Ovary (tissue), 10 donors: ENCODE measurements at regions of chr17 and their contacts with region 1.

Region 1: DNA sequence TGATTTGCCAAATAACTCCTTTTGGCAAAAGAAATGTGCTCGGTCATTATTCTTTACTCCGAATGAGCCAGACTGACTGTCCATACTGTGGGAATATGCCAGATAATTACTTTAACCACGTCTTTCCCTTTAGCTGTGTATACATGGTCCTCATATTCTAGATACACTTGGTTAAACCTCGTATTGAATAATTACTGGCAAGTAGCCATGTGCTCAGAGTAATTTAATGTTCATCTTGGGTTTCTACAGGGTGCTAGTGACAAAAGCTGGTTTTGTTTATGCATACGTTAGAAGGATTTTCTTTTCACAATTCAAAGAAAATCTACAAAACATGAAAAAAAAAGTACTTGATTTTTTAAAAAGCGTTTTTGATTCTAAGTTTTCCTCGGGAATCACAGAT is 540.3 kb downstream of the KCNJ2 start:
- DNase-seq: no peak
- H3K4me3 ChIP-seq: no peak overlapping the region
- H3K27ac ChIP-seq: no peak overlapping the region
- H3K4me1 ChIP-seq: no peaks in the 10 kb centered on the region
- H3K27me3 ChIP-seq: no peaks in the 10 kb centered on the region
- CTCF ChIP-seq: no peak
- EP300 ChIP-seq: no peak
- POLR2A ChIP-seq: no peak

Region 2: GRCh38 chr17:70099884-70100283 is 609.7 kb before region 1 on chr17:
- intact Hi-C with region 1: loop called in 1 of 4 experiments (anchors 5 kb)
- DNase-seq: no peak
- H3K4me3 ChIP-seq: no peak overlapping the region
- H3K27ac ChIP-seq: no peak overlapping the region
- H3K4me1 ChIP-seq: no peaks in the 10 kb centered on the region
- H3K27me3 ChIP-seq: no peaks in the 10 kb centered on the region
- CTCF ChIP-seq: no peak
- EP300 ChIP-seq: no peak
- POLR2A ChIP-seq: no peak